GM10248 (cell line): ENCODE measurements at regions of chr1 and their contacts with region 1.

Region 1: DNA sequence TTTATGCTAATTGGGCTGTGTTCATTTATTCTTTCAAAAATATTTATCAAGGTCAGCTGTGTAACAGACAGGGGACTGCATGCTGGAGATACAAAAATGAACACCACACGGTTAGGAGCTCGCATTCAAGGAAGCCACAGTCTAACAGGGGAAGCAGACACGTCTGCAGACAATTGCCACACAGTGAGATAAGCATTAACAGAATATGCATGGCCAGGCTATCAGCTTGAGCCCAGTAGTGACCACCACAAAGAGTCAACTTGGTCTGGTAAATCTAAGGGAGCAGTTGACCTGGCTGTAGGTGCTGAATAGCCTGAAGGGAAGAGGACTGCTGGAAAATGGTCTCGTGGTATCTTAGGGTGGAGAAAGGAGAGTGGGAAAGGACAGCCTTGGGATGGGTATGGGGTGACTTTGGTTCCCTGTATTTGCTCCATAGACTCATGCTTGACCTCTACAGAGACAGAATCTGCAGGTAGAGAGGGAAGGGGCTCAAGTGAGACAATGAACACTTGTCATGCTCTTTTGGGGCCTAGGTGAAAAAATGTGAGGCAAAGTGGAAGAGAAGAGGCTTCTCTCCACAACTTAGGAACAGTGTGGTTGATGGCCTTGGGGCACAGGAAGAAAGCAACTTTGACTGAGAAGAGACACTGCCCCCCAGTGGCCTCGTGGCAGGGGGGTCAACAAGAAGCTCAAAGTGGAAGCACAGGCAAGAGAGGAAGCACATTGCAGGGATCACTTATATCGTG is 7.6 kb upstream of the NPL start:
- DNase-seq: peak; percentile 59
- CTCF ChIP-seq: peak; percentile 87

Region 2: GRCh38 chr1:182629499-182630096 is 152.4 kb before region 1 on chr1:
- CTCF ChIA-PET with region 1: interaction called, 17 read pairs
- POLR2A ChIA-PET with region 1: no interaction called
- DNase-seq: no peak
- CTCF ChIP-seq: no peak

Region 3: GRCh38 chr1:182643706-182644105 is 138.3 kb before region 1 on chr1:
- CTCF ChIA-PET with region 1: interaction called, 18 read pairs
- POLR2A ChIA-PET with region 1: no interaction called
- DNase-seq: no peak
- CTCF ChIP-seq: no peak

Region 4: DNA sequence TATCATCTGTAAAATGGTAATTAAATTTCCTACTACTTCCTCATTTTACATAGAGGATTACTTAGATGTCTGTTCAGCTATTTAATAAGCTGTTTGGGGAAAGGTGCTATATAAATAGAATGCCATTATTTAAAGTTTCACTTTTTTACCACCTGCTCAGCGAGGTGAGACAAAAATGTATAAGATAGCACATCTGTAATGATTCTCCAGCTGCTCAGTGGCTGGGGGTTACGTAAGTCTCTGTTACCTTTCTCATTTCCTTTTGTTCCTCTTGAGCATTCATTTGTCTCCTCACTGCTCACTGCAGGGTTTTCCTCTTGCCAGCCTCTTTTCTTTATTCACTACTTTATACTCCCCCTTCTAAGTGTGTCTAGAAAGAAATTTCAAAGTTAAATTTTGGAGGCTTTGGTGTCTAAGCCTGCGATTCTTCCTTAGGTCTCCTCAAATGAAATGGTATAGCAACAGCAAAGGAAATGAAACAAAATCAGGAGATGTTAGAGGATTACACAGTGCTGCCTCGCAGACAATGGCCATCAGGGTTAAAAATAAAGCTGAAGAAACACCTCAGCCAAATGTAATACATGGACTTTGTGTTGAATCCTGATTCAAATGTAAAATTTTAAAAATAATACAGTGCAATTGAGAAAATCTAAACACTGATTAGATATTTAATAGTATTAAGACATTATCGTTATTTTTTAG is 104.5 kb before region 1 on chr1:
- CTCF ChIA-PET with region 1: interaction called, 15 read pairs
- POLR2A ChIA-PET with region 1: no interaction called
- DNase-seq: peak; percentile 68
- CTCF ChIP-seq: no peak

Region 5: DNA sequence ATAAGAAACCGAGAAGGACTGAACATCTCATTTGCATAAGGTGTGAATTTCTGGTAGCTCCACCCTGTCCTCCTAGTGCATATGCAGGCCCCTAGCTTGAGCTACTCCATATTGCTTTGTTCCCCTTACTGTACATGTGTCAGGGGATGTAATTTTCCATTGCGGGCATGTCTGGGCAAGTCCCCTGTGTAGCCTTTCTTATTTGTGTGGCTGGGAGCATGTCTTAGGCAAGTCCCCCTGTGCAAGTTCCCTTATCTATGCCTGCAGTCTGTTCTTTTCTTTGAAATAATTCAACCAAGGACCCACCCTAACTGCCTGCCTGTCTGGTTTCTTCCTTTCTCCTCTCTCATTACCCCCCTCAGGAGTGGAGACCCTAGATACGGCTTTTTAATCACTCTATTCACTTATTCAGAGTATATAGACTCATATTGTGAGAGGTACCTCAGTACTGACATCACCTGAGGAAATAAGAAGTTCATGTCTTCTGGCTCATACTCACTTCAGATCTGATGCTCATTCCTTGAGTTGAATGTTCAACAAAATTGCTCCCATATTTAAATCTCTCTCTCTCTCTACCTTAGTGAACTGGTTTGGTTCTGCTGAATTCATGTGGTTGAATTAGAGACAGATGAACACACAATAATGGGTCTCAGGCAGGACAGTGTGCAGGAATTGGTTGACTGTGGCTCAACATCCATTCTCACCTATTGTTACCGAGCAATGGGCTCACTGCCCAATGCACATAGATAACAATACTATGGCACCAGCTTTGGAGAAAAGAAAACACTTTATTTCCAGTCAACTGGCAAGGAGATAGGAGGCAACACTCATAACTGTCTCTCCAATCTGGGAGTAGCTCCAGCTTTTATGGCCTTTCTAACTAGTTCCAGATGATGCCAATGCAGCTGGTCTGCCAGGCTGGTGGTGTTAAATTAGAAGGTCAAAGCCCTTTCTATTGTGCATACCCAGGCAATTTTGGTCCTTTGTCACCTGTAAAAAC is 20.3 kb before region 1 on chr1:
- CTCF ChIA-PET with region 1: interaction called, 132 read pairs
- POLR2A ChIA-PET with region 1: no interaction called
- DNase-seq: no peak
- CTCF ChIP-seq: no peak

Region 6: GRCh38 chr1:182823220-182823619 is 41.2 kb after region 1 on chr1:
- CTCF ChIA-PET with region 1: interaction called, 10 read pairs
- POLR2A ChIA-PET with region 1: no interaction called
- DNase-seq: no peak
- CTCF ChIP-seq: no peak